Motor neuron (in vitro differentiated cells): ENCODE measurements at regions of chr9 and their contacts with region 1.

Region 1: DNA sequence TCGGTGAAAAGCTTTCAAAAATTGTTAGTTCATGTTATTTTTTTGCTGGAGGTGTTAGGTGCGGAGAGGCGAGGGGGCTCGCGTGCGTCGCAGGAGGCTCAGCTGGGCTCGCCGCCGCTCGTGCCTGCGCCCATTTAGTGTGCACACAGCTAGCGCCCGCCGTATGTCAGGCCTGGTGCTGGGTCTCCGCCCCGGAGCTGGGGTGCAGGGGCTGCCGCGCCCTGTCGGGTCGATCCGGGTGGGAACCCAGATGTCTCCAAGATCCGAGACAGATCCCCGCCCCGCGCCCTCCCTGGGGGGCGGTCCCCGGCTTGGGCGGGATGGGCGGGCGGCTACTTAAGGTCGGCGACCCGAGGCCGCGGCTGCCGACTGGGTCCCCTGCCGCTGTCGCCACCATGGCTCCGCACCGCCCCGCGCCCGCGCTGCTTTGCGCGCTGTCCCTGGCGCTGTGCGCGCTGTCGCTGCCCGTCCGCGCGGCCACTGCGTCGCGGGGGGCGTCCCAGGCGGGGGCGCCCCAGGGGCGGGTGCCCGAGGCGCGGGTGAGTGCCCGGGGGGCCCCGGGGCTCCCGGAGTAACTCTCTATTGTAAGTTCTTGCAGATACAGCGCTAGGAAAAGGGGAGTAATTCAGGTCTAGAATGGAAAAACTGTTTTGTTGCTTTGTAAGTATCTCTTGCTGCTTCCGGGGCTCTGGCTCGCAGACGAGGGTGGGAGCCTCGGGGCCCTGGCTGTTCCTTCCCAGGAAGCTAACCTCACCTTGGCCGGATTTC is 31.7 kb downstream of the GSN start:
- ATAC-seq: peak; percentile 65 to 88 (median 81)
- H3K4me3 ChIP-seq: peak overlapping the region; percentile 18 to 27 (median 23)
- H3K27ac ChIP-seq: no peak overlapping the region
- H3K4me1 ChIP-seq: peaks cover 8 to 30% of the 10 kb centered on the region in 2 donors

Region 2: GRCh38 chr9:121201738-121202533 is 97.7 kb before region 1 on chr9 and contains the start of gene RAB14:
- in situ Hi-C with region 1: loop called in 1 of 9 experiments (anchors 25 kb)
- ATAC-seq: peak; percentile 88 to 96 (median 94)
- H3K4me3 ChIP-seq: peak within 1 kb of the TSS; percentile 61 to 87 (median 76)
- H3K27ac ChIP-seq: peak within 1 kb of the TSS; percentile 92 to 97
- H3K4me1 ChIP-seq: peaks cover 26 to 34% of the 10 kb centered on the region in 2 donors
- total RNA-seq, gene RAB14: 21.3 to 56.0 (median 40.7) TPM

Region 3: GRCh38 chr9:121213136-121213806 is 86.4 kb before region 1 on chr9:
- in situ Hi-C with region 1: loop called in 2 of 9 experiments (anchors 10 to 25 kb)
- ATAC-seq: peak; percentile 88 to 99 (median 96)
- H3K4me3 ChIP-seq: no peak overlapping the region
- H3K27ac ChIP-seq: no peak overlapping the region
- H3K4me1 ChIP-seq: no peaks in the 10 kb centered on the region

Region 4: GRCh38 chr9:121650217-121651007 is 350.8 kb after region 1 on chr9:
- in situ Hi-C with region 1: no loop called
- ATAC-seq: peak; percentile 60 to 81 (median 76)
- H3K4me3 ChIP-seq: no peak overlapping the region
- H3K27ac ChIP-seq: no peak overlapping the region
- H3K4me1 ChIP-seq: peaks cover 10 to 24% of the 10 kb centered on the region in 2 donors